ENCODE measurements at regions of chr9 and their contacts with region 1.

Region 1: GRCh38 chr9:69672596-69673310 is 582 bp upstream of the APBA1 start:
- DNase-seq: peak; percentile 83 to 92 (median 85)
- ATAC-seq: peak; percentile 87 to 93 (median 92)
- H3K4me3 ChIP-seq: peak overlapping the region; percentile 48 to 99 (median 82)
- H3K27ac ChIP-seq: peak overlapping the region; percentile 35 to 89 (median 80)
- H3K4me1 ChIP-seq: peaks cover 0 to 27% (median 8%) of the 10 kb centered on the region in 12 donors
- H3K27me3 ChIP-seq: no peaks in the 10 kb centered on the region
- CTCF ChIP-seq: peak; percentile 76 to 97 (median 86)
- POLR2A ChIP-seq: no peak

Region 2: DNA sequence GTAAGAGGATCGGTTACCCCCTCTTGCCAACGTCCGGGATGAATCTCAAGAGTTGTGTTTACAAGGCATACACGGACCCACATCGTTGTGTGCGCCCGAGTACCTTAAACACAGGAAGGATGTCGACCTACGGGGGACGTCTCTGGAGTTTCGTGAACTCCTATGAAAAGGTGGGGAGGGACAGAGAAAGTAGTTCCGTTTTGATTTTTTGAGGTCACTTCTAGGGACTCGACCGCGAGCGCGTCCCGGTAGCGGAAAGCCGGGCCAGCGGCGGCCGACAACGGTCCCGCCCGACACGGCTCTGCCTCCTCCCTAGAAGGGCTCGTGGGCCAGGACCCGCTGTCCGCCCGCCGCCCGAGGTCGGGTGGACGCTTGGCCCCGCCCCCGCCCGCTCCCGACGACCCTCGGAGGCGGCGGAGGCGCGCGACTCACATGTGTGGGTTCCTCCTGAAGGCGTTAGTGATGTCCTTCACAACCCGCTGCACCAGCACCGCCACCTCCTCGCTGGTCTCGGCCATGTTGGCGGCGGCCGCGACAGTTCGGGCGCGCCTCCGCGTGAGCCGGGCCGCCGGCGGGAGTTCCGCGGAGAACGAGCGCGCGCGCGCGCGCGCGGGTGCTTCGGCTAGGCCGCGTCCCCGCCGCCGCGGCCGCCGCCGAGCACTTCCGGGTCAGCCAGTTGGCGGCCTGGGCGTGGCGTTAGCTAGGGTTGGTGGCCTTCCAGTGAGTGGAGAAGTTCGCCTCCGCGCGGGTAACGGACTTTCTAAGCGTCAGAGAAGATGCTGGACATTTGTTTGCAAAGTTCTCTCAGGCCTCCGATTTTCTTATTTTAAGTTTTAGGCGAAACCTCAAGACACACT is 86.9 kb after region 1 on chr9 and contains the start of gene PTAR1:
- intact Hi-C with region 1: loop called in 8 of 10 experiments (anchors 1 to 5 kb)
- DNase-seq: peak; percentile 93 to 96 (median 94)
- ATAC-seq: peak; percentile 91 to 99 (median 97)
- H3K4me3 ChIP-seq: peak within 1 kb of the TSS; percentile 76 to 98 (median 90)
- H3K27ac ChIP-seq: peak within 1 kb of the TSS; percentile 93 to 98 (median 98)
- H3K4me1 ChIP-seq: peaks cover 3 to 35% (median 19%) of the 10 kb centered on the region in 12 donors
- H3K27me3 ChIP-seq: no peaks in the 10 kb centered on the region
- CTCF ChIP-seq: peak in 1 of 12 donors; percentile 6
- POLR2A ChIP-seq: peak in 1 of 2 donors; percentile 53
- total RNA-seq, gene PTAR1: 18.4 to 37.4 (median 25.8) TPM

Region 3: GRCh38 chr9:69919461-69920061 is 246.8 kb after region 1 on chr9:
- intact Hi-C with region 1: loop called in 1 of 10 experiments (anchors 5 kb)
- DNase-seq: no peak
- ATAC-seq: peak; percentile 44 to 82 (median 72)
- H3K4me3 ChIP-seq: no peak overlapping the region
- H3K27ac ChIP-seq: no peak overlapping the region
- H3K4me1 ChIP-seq: peaks cover 0 to 3% (median 0%) of the 10 kb centered on the region in 12 donors
- H3K27me3 ChIP-seq: peaks cover 0 to 12% (median 0%) of the 10 kb centered on the region in 9 donors
- CTCF ChIP-seq: peak; percentile 47 to 80 (median 64)
- POLR2A ChIP-seq: no peak

Measured in heart left ventricle (tissue), 16 donors.